ENCODE measurements at regions of chr5 and their contacts with region 1.

Region 1: GRCh38 chr5:134184155-134185135 is 7.7 kb upstream of the SKP1 start:
- DNase-seq: peak; percentile 77 to 84
- ATAC-seq: peak; percentile 90
- H3K4me3 ChIP-seq: no peak overlapping the region
- H3K27ac ChIP-seq: no peak overlapping the region
- H3K4me1 ChIP-seq: no peaks in the 10 kb centered on the region
- H3K27me3 ChIP-seq: no peaks in the 10 kb centered on the region

Region 2: DNA sequence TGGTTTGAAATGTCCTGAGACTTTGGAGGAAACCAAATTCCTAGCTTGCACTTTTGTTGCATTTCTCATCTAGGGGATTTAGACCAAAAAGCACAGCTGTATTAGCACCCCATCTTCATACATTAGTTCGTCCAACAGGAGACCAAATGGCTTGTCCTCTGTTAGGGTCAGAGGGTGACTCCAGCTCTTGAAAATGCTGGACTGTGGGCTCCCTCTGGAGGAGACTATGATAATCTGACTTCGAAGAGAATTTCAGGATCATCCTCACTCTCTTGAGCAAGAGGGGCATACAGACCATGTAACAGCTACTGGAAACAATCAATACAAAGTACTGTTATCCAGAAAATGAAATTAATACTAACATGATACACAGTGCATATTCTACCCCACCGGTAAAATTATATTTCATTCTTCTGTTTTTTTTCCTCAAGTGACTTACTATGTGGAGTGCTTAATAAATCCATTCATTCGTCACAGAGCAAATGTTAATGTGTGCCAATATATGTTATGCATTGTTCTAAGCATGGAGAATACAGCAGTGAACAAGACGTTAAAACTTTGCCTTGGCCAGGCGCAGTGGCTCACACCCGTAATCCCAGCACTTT is 105.2 kb after region 1 on chr5:
- intact Hi-C with region 1: loop called (anchors 1 kb)
- DNase-seq: no peak
- ATAC-seq: peak; percentile 78
- H3K4me3 ChIP-seq: no peak overlapping the region
- H3K27ac ChIP-seq: no peak overlapping the region
- H3K4me1 ChIP-seq: no peaks in the 10 kb centered on the region
- H3K27me3 ChIP-seq: no peaks in the 10 kb centered on the region